Activated CD8-positive, alpha-beta T cell treated with anti-CD3 and anti-CD28 coated beads for 36 hours (primary cell): ENCODE measurements at regions of chr7 and their contacts with region 1.

Region 1: DNA sequence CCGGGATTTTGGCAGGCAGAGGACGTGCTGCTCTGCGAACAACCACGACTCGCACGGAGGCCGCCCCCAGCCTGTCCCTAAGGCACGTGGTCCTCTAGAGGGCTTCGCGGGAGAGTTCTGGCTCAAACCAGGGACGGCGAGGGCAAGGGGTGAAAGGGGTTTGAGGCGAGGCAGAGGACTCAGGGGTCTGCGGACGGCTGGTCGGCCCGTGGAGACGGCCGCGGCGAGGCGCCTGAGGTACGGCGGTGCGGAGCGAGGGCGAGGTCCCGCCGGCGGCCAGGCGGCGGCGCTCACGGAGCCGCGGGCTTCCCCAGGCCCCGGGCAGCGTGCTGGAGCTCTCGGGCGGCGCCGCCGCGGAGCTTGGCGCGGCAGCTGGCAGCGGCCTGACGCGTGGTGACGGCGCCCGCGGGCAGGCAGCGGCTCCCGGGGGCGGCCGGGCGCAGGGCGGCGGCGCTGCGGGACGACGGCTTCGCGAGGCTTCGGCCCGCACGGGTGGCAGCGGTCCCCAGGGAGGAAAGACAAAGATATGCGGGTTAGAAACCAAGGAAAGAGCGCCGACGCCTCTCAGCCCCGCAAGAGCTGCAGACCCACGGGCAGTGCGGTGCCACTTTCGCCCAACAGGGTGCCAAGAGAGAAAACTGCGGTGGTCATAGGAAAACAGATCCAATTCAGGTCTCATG is 44.8 kb downstream of the ZNF800 start:
- DNase-seq: peak; percentile 77
- ATAC-seq: peak; percentile 100
- H3K4me3 Mint-ChIP-seq: peak overlapping the region; percentile 56
- H3K27ac Mint-ChIP-seq: no peak overlapping the region
- H3K4me1 Mint-ChIP-seq: peaks cover 22% of the 10 kb centered on the region
- H3K27me3 Mint-ChIP-seq: no peaks in the 10 kb centered on the region
- CTCF ChIP-seq: no peak

Region 2: DNA sequence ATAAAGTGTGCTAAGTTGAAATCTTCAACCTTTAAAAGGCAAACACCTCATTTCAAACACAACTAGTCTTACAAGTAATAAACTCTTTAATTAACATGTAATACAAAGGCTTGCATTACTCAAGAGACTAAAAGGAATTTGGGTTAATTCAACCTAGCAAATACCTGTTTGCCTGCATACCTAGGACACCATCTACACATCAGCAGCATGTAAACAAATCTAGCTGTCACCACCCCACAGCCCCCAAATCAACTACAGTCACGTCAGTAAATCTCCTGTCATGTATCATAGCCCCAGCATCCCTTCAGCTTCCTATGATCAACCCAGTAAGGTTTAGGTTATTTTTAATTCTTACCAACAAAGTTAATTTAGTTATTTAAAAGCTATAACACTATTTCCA is 11.3 kb after region 1 on chr7:
- CTCF ChIA-PET with region 1: interaction called, 11 read pairs
- POLR2A ChIA-PET with region 1: interaction called, 3 read pairs
- intact Hi-C with region 1: no loop called
- DNase-seq: no peak
- ATAC-seq: no peak
- H3K4me3 Mint-ChIP-seq: no peak overlapping the region
- H3K27ac Mint-ChIP-seq: no peak overlapping the region
- H3K4me1 Mint-ChIP-seq: peaks cover 22% of the 10 kb centered on the region
- H3K27me3 Mint-ChIP-seq: no peaks in the 10 kb centered on the region
- CTCF ChIP-seq: no peak

Region 3: DNA sequence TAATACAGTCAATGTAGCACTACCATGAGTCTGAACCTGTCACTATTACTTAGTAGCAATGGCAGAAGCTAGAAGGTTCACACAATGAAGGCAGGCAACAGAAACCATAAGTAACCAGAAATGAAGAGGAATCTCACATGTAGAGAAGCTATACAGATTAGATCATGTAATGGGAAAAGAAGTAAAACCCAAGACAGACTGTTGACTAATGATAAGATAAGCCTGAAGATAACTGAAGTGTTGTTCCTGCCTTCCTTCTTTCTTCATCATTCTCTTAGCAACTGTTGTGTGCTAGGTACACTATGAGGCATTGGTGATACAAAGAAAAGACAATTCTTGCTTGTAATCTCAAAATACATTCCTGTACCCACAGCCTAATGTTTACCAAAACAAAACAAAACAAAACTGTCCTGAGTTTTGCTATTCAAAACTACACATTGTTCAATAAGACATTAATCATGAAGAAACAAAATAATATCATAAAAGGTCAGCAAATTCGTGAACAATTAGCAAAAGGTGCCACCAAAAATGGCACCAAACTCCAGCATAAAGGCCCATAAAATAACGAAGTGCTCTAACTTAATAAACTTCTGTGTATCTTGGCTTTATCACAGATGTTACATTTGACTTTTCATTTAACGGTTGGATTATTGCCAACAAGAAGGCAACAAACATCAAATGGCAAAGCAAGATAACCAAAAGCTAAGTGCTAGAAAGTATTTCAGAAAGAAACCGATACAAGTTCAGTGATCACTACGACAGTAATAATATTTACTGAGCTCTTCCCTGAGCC is 17.7 kb after region 1 on chr7:
- CTCF ChIA-PET with region 1: interaction called, 50 read pairs
- POLR2A ChIA-PET with region 1: interaction called, 3 read pairs
- intact Hi-C with region 1: no loop called
- DNase-seq: no peak
- ATAC-seq: no peak
- H3K4me3 Mint-ChIP-seq: no peak overlapping the region
- H3K27ac Mint-ChIP-seq: no peak overlapping the region
- H3K4me1 Mint-ChIP-seq: peaks cover 43% of the 10 kb centered on the region
- H3K27me3 Mint-ChIP-seq: no peaks in the 10 kb centered on the region
- CTCF ChIP-seq: no peak

Region 4: DNA sequence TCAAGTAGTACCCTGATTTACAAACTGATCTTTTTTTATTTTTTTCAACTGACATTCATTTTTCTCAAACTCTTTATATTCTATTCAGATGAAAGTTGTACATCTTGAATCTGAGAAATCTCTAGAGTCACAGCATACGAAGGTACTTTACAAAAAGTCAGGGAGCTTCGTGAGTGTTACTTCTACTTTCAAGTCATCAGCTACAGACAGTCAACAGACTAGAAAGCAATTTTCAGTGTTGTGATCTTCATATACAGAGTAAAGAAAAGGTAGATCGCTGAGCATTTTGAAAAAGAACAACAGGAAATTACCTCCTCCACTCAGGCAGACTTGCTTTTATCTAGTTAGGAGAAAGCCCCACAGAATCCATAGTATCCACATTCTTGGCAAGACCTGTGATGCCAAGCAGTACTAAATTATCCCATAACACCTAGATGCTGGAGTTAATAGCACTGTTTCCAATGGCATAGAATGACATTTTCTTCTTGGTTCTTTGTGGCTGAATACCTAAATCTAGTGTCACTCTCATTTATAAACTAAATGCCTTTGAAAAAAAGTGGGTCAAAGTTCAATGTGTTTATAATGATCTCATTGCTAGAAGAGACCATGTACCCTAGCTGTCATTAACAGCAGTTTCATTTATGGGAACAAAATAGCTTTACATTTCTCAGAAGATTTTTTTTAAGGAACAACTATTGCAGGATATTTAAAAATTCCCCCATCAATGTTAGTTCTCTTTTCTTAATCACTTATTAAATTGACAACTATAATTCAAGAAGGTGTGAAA is 56.8 kb after region 1 on chr7:
- CTCF ChIA-PET with region 1: interaction called, 11 read pairs
- POLR2A ChIA-PET with region 1: no interaction called
- intact Hi-C with region 1: no loop called
- DNase-seq: no peak
- ATAC-seq: peak; percentile 80
- H3K4me3 Mint-ChIP-seq: peak overlapping the region; percentile 49
- H3K27ac Mint-ChIP-seq: peak overlapping the region; percentile 60
- H3K4me1 Mint-ChIP-seq: peaks cover 24% of the 10 kb centered on the region
- H3K27me3 Mint-ChIP-seq: no peaks in the 10 kb centered on the region
- CTCF ChIP-seq: no peak